MCF 10A (cell line): ENCODE measurements at regions of chr6 and their contacts with region 1.

Region 1: DNA sequence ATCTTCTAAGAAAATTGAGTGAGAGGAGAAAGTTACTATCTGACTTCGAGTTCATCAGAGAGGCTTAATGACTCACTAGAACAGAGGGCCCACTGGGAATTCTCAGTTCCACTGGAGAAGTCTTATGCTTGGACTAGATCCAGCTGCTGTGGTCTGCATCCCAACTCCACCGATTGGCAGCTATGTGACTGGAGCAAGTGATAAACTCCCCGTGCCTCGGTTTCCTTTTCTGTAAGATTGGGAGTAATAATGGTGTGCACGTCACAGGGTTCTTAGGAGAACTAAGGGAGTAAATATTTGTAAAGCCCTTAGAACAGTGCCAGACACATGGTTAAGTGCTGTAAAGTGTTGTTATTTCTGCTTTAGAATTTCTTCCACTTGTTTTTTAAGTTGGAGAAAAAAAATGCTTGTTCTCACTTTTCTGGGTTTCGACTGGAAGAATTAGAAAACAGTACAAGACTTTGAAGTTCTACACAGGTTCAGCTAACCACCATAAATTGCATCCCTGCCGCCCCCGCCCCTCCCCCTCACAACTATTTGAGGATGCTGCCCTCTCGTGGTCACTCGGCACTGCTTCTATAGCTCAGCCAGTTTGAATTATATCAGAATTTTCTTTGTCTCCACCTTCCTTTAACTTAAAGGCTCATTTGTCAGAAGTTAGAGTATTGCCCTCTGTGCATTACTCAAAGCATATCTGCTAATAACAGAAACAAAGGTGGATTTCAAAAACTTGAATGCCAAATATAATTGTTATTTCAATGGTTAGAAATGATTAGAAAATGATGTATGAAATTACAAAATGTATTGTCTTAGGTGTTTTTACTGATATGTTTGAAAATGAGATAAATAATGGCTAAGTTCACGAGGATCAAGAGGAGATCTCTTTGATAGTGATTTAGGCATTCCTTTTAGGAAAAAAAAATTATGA is 95.0 kb upstream of the IFNGR1 start:
- DNase-seq: peak; percentile 76
- H3K4me3 Mint-ChIP-seq: no peak overlapping the region
- H3K27ac Mint-ChIP-seq: no peak overlapping the region
- H3K4me1 Mint-ChIP-seq: peaks cover 18% of the 10 kb centered on the region
- H3K27me3 Mint-ChIP-seq: no peaks in the 10 kb centered on the region
- CTCF ChIP-seq: peak; percentile 67

Region 2: GRCh38 chr6:137076277-137077068 is 237.7 kb before region 1 on chr6:
- CTCF ChIA-PET with region 1: interaction called, 20 read pairs
- POLR2A ChIA-PET with region 1: no interaction called
- intact Hi-C with region 1: loop called (anchors 1 kb)
- DNase-seq: peak; percentile 86
- H3K4me3 Mint-ChIP-seq: no peak overlapping the region
- H3K27ac Mint-ChIP-seq: no peak overlapping the region
- H3K4me1 Mint-ChIP-seq: no peaks in the 10 kb centered on the region
- H3K27me3 Mint-ChIP-seq: no peaks in the 10 kb centered on the region
- CTCF ChIP-seq: peak; percentile 68

Region 3: DNA sequence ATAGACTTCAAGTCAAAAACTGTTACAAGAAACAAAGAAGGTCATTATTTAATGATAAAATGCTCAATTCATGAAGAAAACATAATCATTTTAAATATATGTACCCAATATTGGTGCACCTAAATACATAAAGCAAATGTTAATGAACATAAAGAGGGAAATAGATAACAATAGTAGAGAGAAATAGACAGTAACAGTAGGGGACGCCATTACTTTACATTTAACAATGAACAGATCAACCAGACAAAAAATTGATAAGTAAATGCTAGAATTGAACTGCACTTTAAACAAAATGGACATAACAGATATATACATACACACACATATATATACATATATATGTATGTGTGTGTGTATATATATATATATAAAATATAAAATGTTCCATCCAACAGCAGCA is 178.1 kb before region 1 on chr6:
- CTCF ChIA-PET with region 1: interaction called, 5 read pairs
- POLR2A ChIA-PET with region 1: no interaction called
- intact Hi-C with region 1: loop called (anchors 1 kb)
- DNase-seq: peak; percentile 43
- H3K4me3 Mint-ChIP-seq: no peak overlapping the region
- H3K27ac Mint-ChIP-seq: no peak overlapping the region
- H3K4me1 Mint-ChIP-seq: peaks cover 10% of the 10 kb centered on the region
- H3K27me3 Mint-ChIP-seq: no peaks in the 10 kb centered on the region
- CTCF ChIP-seq: peak; percentile 54

Region 4: GRCh38 chr6:137271245-137272183 is 42.7 kb before region 1 on chr6:
- CTCF ChIA-PET with region 1: interaction called, 24 read pairs
- POLR2A ChIA-PET with region 1: interaction called, 21 read pairs
- intact Hi-C with region 1: loop called (anchors 1 kb)
- DNase-seq: peak; percentile 71
- H3K4me3 Mint-ChIP-seq: no peak overlapping the region
- H3K27ac Mint-ChIP-seq: no peak overlapping the region
- H3K4me1 Mint-ChIP-seq: peaks cover 19% of the 10 kb centered on the region
- H3K27me3 Mint-ChIP-seq: no peaks in the 10 kb centered on the region
- CTCF ChIP-seq: peak; percentile 81